Esophagus muscularis mucosa (tissue), 4 donors: ENCODE measurements at regions of chr20 and their contacts with region 1.

Region 1: GRCh38 chr20:46349035-46349741 is 40.9 kb upstream of the CDH22 start:
- DNase-seq: no peak
- H3K4me3 ChIP-seq: no peak overlapping the region
- H3K27ac ChIP-seq: no peak overlapping the region
- H3K4me1 ChIP-seq: peaks cover 8 to 27% (median 22%) of the 10 kb centered on the region in 4 donors
- H3K27me3 ChIP-seq: no peaks in the 10 kb centered on the region
- CTCF ChIP-seq: peak; percentile 64 to 77 (median 70)
- EP300 ChIP-seq: no peak
- POLR2A ChIP-seq: no peak

Region 2: DNA sequence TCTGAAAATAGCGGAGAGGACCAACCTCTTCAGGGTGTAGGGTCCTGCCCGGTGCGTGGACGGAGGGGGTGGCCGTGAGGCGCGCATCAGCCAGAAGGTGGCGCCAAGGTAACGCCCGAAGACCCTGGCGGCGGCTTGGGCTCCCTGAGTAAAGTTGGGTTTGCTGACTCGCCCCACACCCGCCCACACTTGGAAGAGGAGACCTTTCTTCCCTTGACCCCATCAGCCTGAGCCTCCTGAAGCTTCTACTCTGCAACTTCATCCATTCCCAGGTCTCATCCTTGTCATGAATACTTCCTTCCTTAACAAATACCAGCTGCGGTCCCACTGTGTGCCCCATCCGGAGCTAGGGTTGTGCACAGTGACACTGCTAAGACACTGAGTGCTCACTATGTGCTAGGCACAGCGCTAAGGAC is 216.5 kb before region 1 on chr20:
- intact Hi-C with region 1: loop called (anchors 5 kb)
- DNase-seq: no peak
- H3K4me3 ChIP-seq: no peak overlapping the region
- H3K27ac ChIP-seq: no peak overlapping the region
- H3K4me1 ChIP-seq: peaks cover 9 to 24% (median 18%) of the 10 kb centered on the region in 4 donors
- H3K27me3 ChIP-seq: peaks cover 0 to 92% (median 2%) of the 10 kb centered on the region in 4 donors
- CTCF ChIP-seq: peak; percentile 73 to 81 (median 77)
- EP300 ChIP-seq: no peak
- POLR2A ChIP-seq: no peak